H1 (cell line): ENCODE measurements at regions of chr1 and their contacts with region 1.

Region 1: DNA sequence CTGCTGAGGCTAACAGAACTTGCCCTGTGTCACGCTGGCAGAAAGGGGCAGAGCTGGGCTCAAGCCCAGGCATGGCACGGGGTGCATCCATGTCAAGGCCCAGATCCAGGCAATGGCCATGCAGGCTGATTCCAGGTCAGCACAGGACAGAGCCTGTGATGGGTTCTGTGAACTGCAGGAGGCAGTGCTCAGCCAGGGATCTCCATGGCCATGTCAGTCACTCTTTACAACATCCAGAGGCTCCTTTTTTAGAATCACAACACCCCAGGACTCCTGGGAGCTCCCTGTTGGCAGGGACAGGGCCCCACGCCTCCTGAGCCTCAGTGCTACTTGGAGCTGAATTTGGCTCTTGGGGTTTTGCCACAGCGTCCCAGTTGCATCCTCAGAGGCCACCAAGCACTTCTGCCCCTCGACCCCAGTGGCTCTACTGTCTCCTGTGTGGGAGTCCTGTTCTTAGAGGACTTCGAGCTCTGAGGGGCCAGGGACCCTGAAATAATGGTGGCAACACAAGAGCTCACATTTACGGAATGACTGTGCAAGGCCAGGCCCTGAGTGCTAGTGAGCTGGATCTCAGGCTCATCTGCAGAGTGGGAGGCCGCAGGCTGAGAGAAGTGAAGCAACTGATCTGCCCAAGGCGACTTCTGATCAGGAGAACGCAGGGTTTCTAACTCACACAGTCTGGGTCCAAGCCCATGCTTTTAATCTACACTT is 211.5 kb downstream of the TRABD2B start:
- DNase-seq: peak; percentile 10 to 53
- H3K4me3 ChIP-seq: no peak overlapping the region
- H3K27ac ChIP-seq: no peak overlapping the region
- H3K4me1 ChIP-seq: peaks cover 0 to 3% (median 0%) of the 10 kb centered on the region in 4 experiments; a peak in 3 of 7 replicates
- H3K27me3 ChIP-seq: no peaks in the 10 kb centered on the region
- CTCF ChIP-seq: peak; percentile 74 to 84 (median 75)
- EP300 ChIP-seq: no peak
- POLR2A ChIP-seq: no peak
- RAD21 ChIP-seq: peak; percentile 81 to 88

Region 2: GRCh38 chr1:47618830-47619229 is 166.9 kb before region 1 on chr1:
- CTCF ChIA-PET with region 1: no interaction called
- POLR2A ChIA-PET with region 1: no interaction called
- DNase-seq: peak in 1 of 2 experiments; percentile 28
- H3K4me3 ChIP-seq: no peak overlapping the region
- H3K27ac ChIP-seq: no peak overlapping the region
- H3K4me1 ChIP-seq: no peaks in the 10 kb centered on the region
- H3K27me3 ChIP-seq: no peaks in the 10 kb centered on the region; a peak in 3 of 7 replicates
- CTCF ChIP-seq: no peak
- EP300 ChIP-seq: no peak
- POLR2A ChIP-seq: no peak
- RAD21 ChIP-seq: no peak

Region 3: DNA sequence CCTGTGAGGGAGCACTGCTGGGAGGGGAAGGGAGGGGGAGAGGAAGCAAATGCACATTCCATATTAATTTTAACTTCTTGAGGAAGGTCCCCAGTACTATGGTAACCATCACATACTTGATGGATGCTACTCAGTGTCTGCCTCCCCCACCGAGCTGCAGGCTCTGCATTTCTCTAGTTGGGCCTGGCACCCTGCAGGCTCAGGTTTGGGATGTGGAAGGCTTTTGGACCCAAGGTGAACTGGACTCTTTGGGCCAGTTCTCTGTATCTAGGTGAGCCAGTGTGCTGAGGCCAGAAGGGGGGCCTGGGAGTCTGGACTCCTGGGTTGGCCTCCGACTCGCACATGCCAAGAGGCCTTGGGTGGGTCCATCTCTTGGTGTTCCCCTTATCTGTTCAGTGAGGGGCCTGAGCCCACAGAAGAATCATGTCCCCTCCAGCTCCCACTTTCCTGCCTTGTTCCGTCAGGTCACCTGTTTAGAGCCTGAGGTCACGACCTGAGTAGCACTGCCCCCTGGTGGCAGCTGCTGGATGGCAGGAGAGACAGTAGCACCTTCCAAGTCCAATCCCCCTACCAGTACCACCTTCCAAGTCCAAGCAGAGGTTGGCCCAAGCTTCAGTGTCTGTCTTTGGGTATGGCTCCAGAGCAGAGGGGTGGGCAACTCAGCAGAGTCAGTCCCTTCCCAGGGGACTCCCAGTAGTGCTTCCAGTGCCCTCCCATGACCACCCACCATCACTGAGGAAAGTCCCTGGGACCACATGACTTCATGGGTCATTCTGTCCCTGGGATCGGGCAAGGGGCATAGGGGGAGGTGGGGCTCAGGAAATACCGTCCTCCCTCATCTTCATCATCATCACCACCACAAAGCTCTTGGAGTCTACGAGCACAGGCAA is 30.4 kb before region 1 on chr1:
- CTCF ChIA-PET with region 1: interaction called, 14 read pairs
- POLR2A ChIA-PET with region 1: no interaction called
- DNase-seq: peak; percentile 41 to 93
- H3K4me3 ChIP-seq: no peak overlapping the region
- H3K27ac ChIP-seq: no peak overlapping the region
- H3K4me1 ChIP-seq: no peaks in the 10 kb centered on the region; a peak in 1 of 7 replicates
- H3K27me3 ChIP-seq: peaks cover 0 to 2% (median 0%) of the 10 kb centered on the region in 4 experiments; a peak in 1 of 7 replicates
- CTCF ChIP-seq: peak; percentile 75 to 97 (median 95)
- EP300 ChIP-seq: no peak
- POLR2A ChIP-seq: no peak
- RAD21 ChIP-seq: peak; percentile 51 to 64

Region 4: DNA sequence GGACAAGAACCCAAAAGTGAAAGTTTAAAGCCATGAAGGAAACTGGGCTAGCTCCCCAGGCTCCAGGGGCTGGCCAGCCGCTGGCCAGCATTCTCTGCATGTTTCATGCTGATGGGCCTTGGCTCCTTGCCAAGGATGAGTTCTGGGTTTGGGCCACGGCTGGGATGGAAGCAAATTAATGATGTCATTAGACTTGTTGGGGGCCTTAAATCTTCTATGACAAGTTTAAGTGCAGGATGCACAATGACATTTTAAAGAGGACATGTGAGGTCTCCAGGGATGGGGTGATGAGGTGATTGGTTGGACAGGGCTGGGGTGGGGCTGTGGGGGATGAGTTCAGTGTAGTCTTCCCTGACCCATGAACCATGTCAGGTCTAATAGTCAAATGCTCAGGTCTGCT is 11.9 kb after region 1 on chr1:
- CTCF ChIA-PET with region 1: interaction called, 23 read pairs
- POLR2A ChIA-PET with region 1: no interaction called
- DNase-seq: no peak
- H3K4me3 ChIP-seq: no peak overlapping the region
- H3K27ac ChIP-seq: no peak overlapping the region
- H3K4me1 ChIP-seq: no peaks in the 10 kb centered on the region; a peak in 1 of 7 replicates
- H3K27me3 ChIP-seq: no peaks in the 10 kb centered on the region
- CTCF ChIP-seq: no peak
- EP300 ChIP-seq: no peak
- POLR2A ChIP-seq: no peak
- RAD21 ChIP-seq: no peak

Region 5: DNA sequence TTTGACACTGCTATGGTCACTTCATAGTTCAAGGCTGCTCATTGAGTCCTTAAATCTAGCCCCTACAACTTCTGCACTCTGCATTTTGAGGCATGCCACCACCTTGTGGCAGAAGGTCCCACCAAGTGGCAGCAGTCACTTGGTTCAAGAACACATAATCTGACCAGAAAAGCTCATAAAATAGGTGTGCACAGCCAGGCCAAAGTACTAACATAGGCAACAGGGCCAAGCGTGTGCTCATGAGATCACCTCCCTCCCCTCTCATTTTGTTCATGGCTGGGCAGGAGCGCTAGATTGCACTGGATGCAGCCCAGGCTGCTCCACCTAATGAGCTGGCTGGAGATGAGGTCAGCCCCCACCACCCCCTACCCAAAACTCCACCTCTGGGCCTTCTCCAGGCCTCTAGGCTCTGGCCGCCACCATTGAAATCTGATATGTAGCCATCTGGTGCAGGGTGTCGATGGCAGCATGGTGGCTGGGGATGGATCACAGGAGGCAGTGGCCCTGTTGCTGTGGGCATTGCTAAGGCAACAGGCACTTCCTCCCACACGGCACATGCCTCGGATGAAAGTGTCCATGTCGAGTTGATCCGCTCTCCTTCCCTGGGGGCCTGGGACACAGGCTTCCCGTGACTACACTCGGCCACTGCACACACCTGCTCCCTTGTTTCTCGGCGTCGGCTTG is 18.2 kb after region 1 on chr1:
- CTCF ChIA-PET with region 1: interaction called, 14 read pairs
- POLR2A ChIA-PET with region 1: no interaction called
- DNase-seq: no peak
- H3K4me3 ChIP-seq: no peak overlapping the region
- H3K27ac ChIP-seq: no peak overlapping the region
- H3K4me1 ChIP-seq: no peaks in the 10 kb centered on the region; a peak in 1 of 7 replicates
- H3K27me3 ChIP-seq: no peaks in the 10 kb centered on the region
- CTCF ChIP-seq: no peak
- EP300 ChIP-seq: no peak
- POLR2A ChIP-seq: no peak
- RAD21 ChIP-seq: no peak

Region 6: DNA sequence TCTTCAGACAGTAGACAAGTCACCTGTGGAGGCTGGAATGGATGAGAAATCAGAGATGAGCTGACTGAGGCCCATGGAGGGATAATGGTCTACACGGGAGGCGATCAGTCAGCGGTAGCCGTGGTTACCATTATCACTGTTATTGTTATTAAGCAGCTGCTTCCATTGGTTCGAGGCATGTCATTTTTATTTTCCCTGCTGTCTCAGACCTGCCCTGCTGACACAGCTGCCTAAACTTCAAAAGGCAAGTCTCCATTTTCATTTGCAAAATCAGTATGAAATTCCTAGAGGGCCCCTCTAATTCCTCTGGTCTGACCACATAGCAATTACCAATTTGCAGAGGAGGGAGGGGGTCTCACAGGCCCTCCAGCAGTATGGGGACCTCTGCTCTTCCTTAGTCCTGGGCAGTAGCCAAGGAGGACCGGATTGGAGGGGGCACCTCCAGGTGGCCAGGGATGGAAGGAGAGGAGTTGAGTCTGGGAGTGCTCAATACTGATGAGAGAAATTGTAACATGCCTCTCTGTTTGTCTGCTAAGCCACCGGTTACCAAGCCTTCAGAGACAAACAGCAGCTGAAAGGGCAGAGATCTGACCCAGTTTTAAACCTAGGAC is 27.3 kb after region 1 on chr1:
- CTCF ChIA-PET with region 1: interaction called, 16 read pairs
- POLR2A ChIA-PET with region 1: no interaction called
- DNase-seq: no peak
- H3K4me3 ChIP-seq: no peak overlapping the region
- H3K27ac ChIP-seq: no peak overlapping the region
- H3K4me1 ChIP-seq: peaks cover 0 to 7% (median 2%) of the 10 kb centered on the region in 4 experiments; a peak in 4 of 7 replicates
- H3K27me3 ChIP-seq: no peaks in the 10 kb centered on the region
- CTCF ChIP-seq: no peak
- EP300 ChIP-seq: no peak
- POLR2A ChIP-seq: no peak
- RAD21 ChIP-seq: no peak

Region 7: GRCh38 chr1:47931394-47931793 is 145.7 kb after region 1 on chr1:
- CTCF ChIA-PET with region 1: interaction called, 28 read pairs
- POLR2A ChIA-PET with region 1: interaction called, 3 read pairs
- DNase-seq: no peak
- H3K4me3 ChIP-seq: no peak overlapping the region
- H3K27ac ChIP-seq: no peak overlapping the region
- H3K4me1 ChIP-seq: peaks cover 0 to 3% (median 0%) of the 10 kb centered on the region in 4 experiments; a peak in 1 of 7 replicates
- H3K27me3 ChIP-seq: no peaks in the 10 kb centered on the region; a peak in 3 of 7 replicates
- CTCF ChIP-seq: peak; percentile 45 to 49 (median 49)
- EP300 ChIP-seq: no peak
- POLR2A ChIP-seq: no peak
- RAD21 ChIP-seq: peak; percentile 55 to 61